Natural killer cell (primary cell): ENCODE measurements at regions of chr17 and their contacts with region 1.

Region 1: GRCh38 chr17:2282297-2282873 is 21.2 kb downstream of the SMG6 start:
- DNase-seq: peak in 1 of 2 donors; percentile 82
- ATAC-seq: peak in 2 of 3 donors; percentile 66 to 89
- H3K4me3 ChIP-seq: no peak overlapping the region
- H3K4me3 Mint-ChIP-seq: no peak overlapping the region
- H3K27ac ChIP-seq: no peak overlapping the region
- H3K27ac Mint-ChIP-seq: peak overlapping the region; percentile 23 to 68
- H3K4me1 ChIP-seq: no peaks in the 10 kb centered on the region
- H3K4me1 Mint-ChIP-seq: peaks cover 9 to 14% of the 10 kb centered on the region in 2 donors
- H3K27me3 ChIP-seq: no peaks in the 10 kb centered on the region
- H3K27me3 Mint-ChIP-seq: no peaks in the 10 kb centered on the region
- CTCF ChIP-seq: peak; percentile 66

Region 2: GRCh38 chr17:1861391-1862010 is 420.9 kb before region 1 on chr17:
- intact Hi-C with region 1: no loop called
- DNase-seq: no peak
- ATAC-seq: no peak
- H3K4me3 ChIP-seq: no peak overlapping the region
- H3K4me3 Mint-ChIP-seq: no peak overlapping the region
- H3K27ac ChIP-seq: no peak overlapping the region
- H3K27ac Mint-ChIP-seq: no peak overlapping the region
- H3K4me1 ChIP-seq: no peaks in the 10 kb centered on the region
- H3K4me1 Mint-ChIP-seq: no peaks in the 10 kb centered on the region
- H3K27me3 ChIP-seq: no peaks in the 10 kb centered on the region
- H3K27me3 Mint-ChIP-seq: no peaks in the 10 kb centered on the region
- CTCF ChIP-seq: no peak

Region 3: DNA sequence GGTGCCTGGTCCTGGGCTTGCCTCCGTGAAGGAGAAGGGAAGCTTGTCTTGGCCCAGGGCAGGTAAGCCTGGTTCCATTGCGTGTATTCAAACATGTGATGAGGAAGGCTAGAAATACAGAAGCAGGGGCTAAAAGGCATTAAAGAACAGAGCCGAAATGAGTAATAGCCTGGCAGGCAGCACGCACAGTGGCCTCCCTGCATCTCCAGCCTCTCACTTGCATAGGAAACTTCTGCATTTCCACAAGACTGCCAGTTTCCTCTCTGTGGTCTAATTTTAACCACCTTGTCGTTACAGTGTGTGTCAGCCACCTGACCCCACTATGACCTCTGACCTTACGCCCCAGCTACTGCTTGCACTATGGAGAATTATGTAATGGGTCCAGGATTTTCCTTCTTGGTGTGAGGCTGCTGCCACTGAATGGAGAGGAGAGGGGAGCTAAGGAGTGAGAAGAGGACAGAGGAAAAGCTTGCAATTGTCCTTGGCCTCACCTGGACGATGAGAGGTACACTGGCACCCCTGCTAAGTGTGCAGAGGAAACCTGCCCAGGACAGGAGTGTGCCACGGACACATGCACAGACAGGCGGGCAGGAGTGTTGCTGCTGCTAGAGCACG is 194.7 kb before region 1 on chr17:
- intact Hi-C with region 1: no loop called
- DNase-seq: peak in 1 of 2 donors; percentile 60
- ATAC-seq: peak; percentile 36 to 51 (median 43)
- H3K4me3 ChIP-seq: no peak overlapping the region
- H3K4me3 Mint-ChIP-seq: peak overlapping the region; percentile 35
- H3K27ac ChIP-seq: no peak overlapping the region
- H3K27ac Mint-ChIP-seq: peak overlapping the region; percentile 85 to 95
- H3K4me1 ChIP-seq: peaks cover 71% of the 10 kb centered on the region
- H3K4me1 Mint-ChIP-seq: peaks cover 69 to 82% of the 10 kb centered on the region in 2 donors
- H3K27me3 ChIP-seq: no peaks in the 10 kb centered on the region
- H3K27me3 Mint-ChIP-seq: no peaks in the 10 kb centered on the region
- CTCF ChIP-seq: no peak

Region 4: GRCh38 chr17:2244545-2245525 is 37.5 kb before region 1 on chr17:
- intact Hi-C with region 1: loop called (anchors 1 kb)
- DNase-seq: peak; percentile 78 to 92
- ATAC-seq: peak; percentile 96 to 100 (median 100)
- H3K4me3 ChIP-seq: no peak overlapping the region
- H3K4me3 Mint-ChIP-seq: no peak overlapping the region
- H3K27ac ChIP-seq: no peak overlapping the region
- H3K27ac Mint-ChIP-seq: peak overlapping the region; percentile 11 to 73
- H3K4me1 ChIP-seq: peaks cover 8% of the 10 kb centered on the region
- H3K4me1 Mint-ChIP-seq: peaks cover 16 to 27% of the 10 kb centered on the region in 2 donors
- H3K27me3 ChIP-seq: no peaks in the 10 kb centered on the region
- H3K27me3 Mint-ChIP-seq: no peaks in the 10 kb centered on the region
- CTCF ChIP-seq: peak; percentile 97